ENCODE measurements at regions of chr1 and their contacts with region 1.

Region 1: GRCh38 chr1:155504207-155504606 is 58.4 kb downstream of the ASH1L start:
- DNase-seq: peak; percentile 50
- H3K4me3 ChIP-seq: no peak overlapping the region
- H3K27ac ChIP-seq: no peak overlapping the region
- H3K4me1 ChIP-seq: peaks cover 5 to 8% of the 10 kb centered on the region in 2 experiments; a peak in 3 of 4 replicates
- H3K27me3 ChIP-seq: no peaks in the 10 kb centered on the region
- CTCF ChIP-seq: peak; percentile 61
- EP300 ChIP-seq: no peak
- RAD21 ChIP-seq: peak; percentile 87

Region 2: DNA sequence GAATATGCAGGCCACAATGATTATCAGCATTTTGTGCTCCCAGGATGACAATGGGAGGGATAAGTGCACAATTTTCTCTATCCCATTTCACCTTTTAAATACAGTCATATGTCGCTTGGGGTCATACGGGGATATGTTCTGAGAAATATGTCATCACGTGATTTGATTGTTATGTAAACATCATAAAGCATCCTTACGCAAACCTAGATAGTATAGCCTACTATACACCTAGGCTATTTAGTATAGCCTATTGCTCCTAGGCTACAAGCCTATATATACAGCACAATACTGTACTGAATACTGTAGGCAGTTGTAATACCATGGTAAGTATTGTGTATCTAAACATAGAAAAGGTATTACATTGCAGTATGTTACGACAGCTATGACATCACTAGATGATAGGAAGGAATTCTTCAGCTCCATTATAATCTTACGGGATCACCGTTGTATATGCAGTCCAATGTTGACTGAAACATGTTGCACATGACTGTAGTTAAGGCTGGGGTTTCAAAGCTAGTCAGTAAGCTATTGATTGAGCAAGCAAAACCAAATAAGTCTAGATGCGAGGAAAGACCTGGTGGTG is 164.6 kb before region 1 on chr1:
- CTCF ChIA-PET with region 1: interaction called, 14 read pairs
- POLR2A ChIA-PET with region 1: no interaction called
- DNase-seq: no peak
- H3K4me3 ChIP-seq: no peak overlapping the region
- H3K27ac ChIP-seq: no peak overlapping the region
- H3K4me1 ChIP-seq: no peaks in the 10 kb centered on the region
- H3K27me3 ChIP-seq: no peaks in the 10 kb centered on the region
- CTCF ChIP-seq: no peak
- EP300 ChIP-seq: no peak
- RAD21 ChIP-seq: no peak

Measured in SK-N-SH (cell line).